ENCODE measurements at regions of chr1 and their contacts with region 1.

Region 1: GRCh38 chr1:112674439-112674985 is at the start of gene MOV10:
- DNase-seq: peak; percentile 84
- H3K4me3 Mint-ChIP-seq: peak within 1 kb of the TSS; percentile 99
- H3K27ac Mint-ChIP-seq: peak within 1 kb of the TSS; percentile 100
- H3K4me1 Mint-ChIP-seq: peaks cover 35% of the 10 kb centered on the region
- H3K27me3 Mint-ChIP-seq: no peaks in the 10 kb centered on the region
- CTCF ChIP-seq: no peak
- total RNA-seq, gene MOV10: 54.9 and 55.6 TPM in 2 replicates

Region 2: GRCh38 chr1:112390775-112391602 is 283.5 kb before region 1 on chr1:
- CTCF ChIA-PET with region 1: interaction called, 11 read pairs
- POLR2A ChIA-PET with region 1: interaction called, 11 read pairs
- intact Hi-C with region 1: loop called (anchors 2 kb)
- DNase-seq: peak; percentile 95
- H3K4me3 Mint-ChIP-seq: peak overlapping the region; percentile 75
- H3K27ac Mint-ChIP-seq: peak overlapping the region; percentile 11
- H3K4me1 Mint-ChIP-seq: peaks cover 33% of the 10 kb centered on the region
- H3K27me3 Mint-ChIP-seq: no peaks in the 10 kb centered on the region
- CTCF ChIP-seq: peak; percentile 75

Region 3: DNA sequence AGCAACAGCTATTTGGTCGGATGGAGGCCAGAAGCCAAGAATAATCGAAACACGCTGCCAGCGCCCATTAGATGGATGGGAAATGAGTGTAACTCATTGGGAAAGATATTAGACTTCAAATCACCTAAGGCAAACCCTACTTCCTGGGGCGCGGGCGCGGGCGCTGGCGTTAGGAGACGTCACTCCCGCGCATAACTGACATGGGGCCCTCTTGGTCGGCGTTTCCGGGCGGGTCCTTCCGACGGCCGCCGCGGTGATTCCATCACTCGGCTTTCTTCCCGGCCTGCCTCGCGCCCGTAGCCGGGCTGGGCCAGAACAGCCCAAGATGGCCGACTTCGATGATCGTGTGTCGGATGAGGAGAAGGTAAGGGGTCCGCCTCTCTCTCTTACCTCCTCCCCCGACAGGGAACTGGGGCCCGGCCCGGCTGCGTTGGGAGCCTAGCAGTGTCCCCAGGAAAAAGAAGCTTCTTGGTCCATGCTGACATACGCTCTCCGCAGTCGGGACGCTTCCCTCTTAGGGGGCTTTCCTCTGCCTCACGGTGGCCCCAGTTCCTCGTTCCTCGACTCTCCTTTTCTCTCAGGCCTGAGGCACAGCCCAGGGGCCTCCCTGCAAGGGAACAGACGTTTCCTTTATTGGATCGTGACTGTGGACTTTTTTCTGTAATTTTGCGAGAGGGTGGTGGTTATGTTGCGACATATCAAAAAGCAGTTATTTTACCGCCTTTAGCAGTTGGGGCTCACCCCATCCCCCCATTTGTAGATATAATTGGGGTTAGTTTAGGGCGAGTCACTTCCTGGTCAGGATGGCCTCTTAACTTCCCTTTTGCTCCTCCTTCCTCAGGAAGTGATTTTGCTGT is 54.8 kb before region 1 on chr1 and contains the start of gene CAPZA1:
- CTCF ChIA-PET with region 1: interaction called, 8 read pairs
- POLR2A ChIA-PET with region 1: interaction called, 76 read pairs
- intact Hi-C with region 1: loop called (anchors 1 kb)
- DNase-seq: peak; percentile 94
- H3K4me3 Mint-ChIP-seq: peak within 1 kb of the TSS; percentile 97
- H3K27ac Mint-ChIP-seq: peak within 1 kb of the TSS; percentile 95
- H3K4me1 Mint-ChIP-seq: peaks cover 12% of the 10 kb centered on the region
- H3K27me3 Mint-ChIP-seq: no peaks in the 10 kb centered on the region
- CTCF ChIP-seq: no peak
- total RNA-seq, gene CAPZA1: 150 and 174 TPM in 2 replicates

Region 4: GRCh38 chr1:112637254-112638116 is 37.0 kb before region 1 on chr1:
- CTCF ChIA-PET with region 1: interaction called, 5 read pairs
- POLR2A ChIA-PET with region 1: interaction called, 23 read pairs
- intact Hi-C with region 1: no loop called
- DNase-seq: no peak
- H3K4me3 Mint-ChIP-seq: no peak overlapping the region
- H3K27ac Mint-ChIP-seq: peak overlapping the region; percentile 46
- H3K4me1 Mint-ChIP-seq: peaks cover 32% of the 10 kb centered on the region
- H3K27me3 Mint-ChIP-seq: no peaks in the 10 kb centered on the region
- CTCF ChIP-seq: no peak

Region 5: GRCh38 chr1:112660072-112660471 is 14.4 kb before region 1 on chr1:
- CTCF ChIA-PET with region 1: interaction called, 14 read pairs
- POLR2A ChIA-PET with region 1: interaction called, 24 read pairs
- intact Hi-C with region 1: no loop called
- DNase-seq: no peak
- H3K4me3 Mint-ChIP-seq: no peak overlapping the region
- H3K27ac Mint-ChIP-seq: no peak overlapping the region
- H3K4me1 Mint-ChIP-seq: no peaks in the 10 kb centered on the region
- H3K27me3 Mint-ChIP-seq: no peaks in the 10 kb centered on the region
- CTCF ChIP-seq: no peak

Region 6: GRCh38 chr1:112700290-112701226 is 26.0 kb after region 1 on chr1:
- CTCF ChIA-PET with region 1: interaction called, 14 read pairs
- POLR2A ChIA-PET with region 1: interaction called, 71 read pairs
- intact Hi-C with region 1: loop called (anchors 1 kb)
- DNase-seq: peak; percentile 92
- H3K4me3 Mint-ChIP-seq: peak overlapping the region; percentile 14
- H3K27ac Mint-ChIP-seq: peak overlapping the region; percentile 54
- H3K4me1 Mint-ChIP-seq: peaks cover 57% of the 10 kb centered on the region
- H3K27me3 Mint-ChIP-seq: no peaks in the 10 kb centered on the region
- CTCF ChIP-seq: no peak

Measured in MCF 10A (cell line).